ENCODE measurements at regions of chr1 and their contacts with region 1.

Region 1: GRCh38 chr1:171781176-171781875 is at the start of gene METTL13:
- DNase-seq: peak; percentile 99
- ATAC-seq: peak; percentile 99
- H3K4me3 ChIP-seq: peak within 1 kb of the TSS; percentile 82
- H3K27ac ChIP-seq: peak within 1 kb of the TSS; percentile 87 to 91
- H3K4me1 ChIP-seq: peaks cover 9% of the 10 kb centered on the region; the same call in 1 of the 3 replicates
- CTCF ChIP-seq: no peak
- EP300 ChIP-seq: no peak
- POLR2A ChIP-seq: peak; percentile 95
- RAD21 ChIP-seq: no peak
- polyA plus RNA-seq, gene METTL13: 54.0 and 61.2 TPM in 2 replicates

Region 2: GRCh38 chr1:171741872-171742576 is 39.3 kb before region 1 on chr1 and contains the start of gene VAMP4:
- CTCF ChIA-PET with region 1: interaction called, 3 read pairs
- POLR2A ChIA-PET with region 1: interaction called, 27 read pairs
- DNase-seq: peak; percentile 74 to 83
- ATAC-seq: peak; percentile 95 to 96
- H3K4me3 ChIP-seq: peak within 1 kb of the TSS; percentile 82
- H3K27ac ChIP-seq: peak within 1 kb of the TSS; percentile 87 to 94
- H3K4me1 ChIP-seq: peaks cover 23% of the 10 kb centered on the region; the same call in 2 of the 3 replicates
- CTCF ChIP-seq: no peak
- EP300 ChIP-seq: no peak
- POLR2A ChIP-seq: peak; percentile 63
- RAD21 ChIP-seq: 0 out of 5 replicates have a peak, but pooled peaks of 1 of the 2 experiments have one; percentile 12
- polyA plus RNA-seq, gene VAMP4: 6.6 and 9.3 TPM in 2 replicates